Panc1 (cell line): ENCODE measurements at regions of chr6 and their contacts with region 1.

Region 1: DNA sequence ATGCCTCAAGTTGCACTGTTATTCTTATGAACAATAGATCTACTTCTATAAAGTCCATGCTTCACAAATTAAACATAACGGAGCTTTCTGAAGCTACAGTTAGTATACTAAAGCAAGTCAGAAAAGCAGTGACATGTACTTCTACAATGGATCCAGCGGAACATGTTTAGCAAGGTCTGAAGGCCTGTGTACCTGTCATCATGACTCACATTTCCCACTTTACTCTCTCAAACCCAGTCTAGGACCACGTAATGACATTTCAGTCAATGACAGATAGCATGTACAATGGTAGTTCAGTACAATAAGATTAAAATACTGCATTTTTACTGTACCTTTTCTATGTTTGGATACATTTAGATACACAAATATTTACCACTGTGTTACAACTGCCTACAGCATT is 132.1 kb downstream of the MMS22L start:
- DNase-seq: no peak
- ATAC-seq: no peak
- H3K4me3 ChIP-seq: no peak overlapping the region
- H3K27ac ChIP-seq: no peak overlapping the region
- H3K4me1 ChIP-seq: no peaks in the 10 kb centered on the region
- H3K27me3 ChIP-seq: no peaks in the 10 kb centered on the region
- CTCF ChIP-seq: no peak

Region 2: GRCh38 chr6:97989451-97989850 is 838.5 kb after region 1 on chr6:
- CTCF ChIA-PET with region 1: no interaction called
- POLR2A ChIA-PET with region 1: interaction called, 13 read pairs
- in situ Hi-C with region 1: no loop called
- intact Hi-C with region 1: no loop called
- DNase-seq: no peak
- ATAC-seq: no peak
- H3K4me3 ChIP-seq: no peak overlapping the region
- H3K27ac ChIP-seq: no peak overlapping the region
- H3K4me1 ChIP-seq: no peaks in the 10 kb centered on the region
- H3K27me3 ChIP-seq: no peaks in the 10 kb centered on the region
- CTCF ChIP-seq: no peak